GM10248 (cell line): ENCODE measurements at regions of chr14 and their contacts with region 1.

Region 1: GRCh38 chr14:20413045-20413799 is at the start of gene TEP1:
- DNase-seq: peak; percentile 80
- CTCF ChIP-seq: no peak

Region 2: DNA sequence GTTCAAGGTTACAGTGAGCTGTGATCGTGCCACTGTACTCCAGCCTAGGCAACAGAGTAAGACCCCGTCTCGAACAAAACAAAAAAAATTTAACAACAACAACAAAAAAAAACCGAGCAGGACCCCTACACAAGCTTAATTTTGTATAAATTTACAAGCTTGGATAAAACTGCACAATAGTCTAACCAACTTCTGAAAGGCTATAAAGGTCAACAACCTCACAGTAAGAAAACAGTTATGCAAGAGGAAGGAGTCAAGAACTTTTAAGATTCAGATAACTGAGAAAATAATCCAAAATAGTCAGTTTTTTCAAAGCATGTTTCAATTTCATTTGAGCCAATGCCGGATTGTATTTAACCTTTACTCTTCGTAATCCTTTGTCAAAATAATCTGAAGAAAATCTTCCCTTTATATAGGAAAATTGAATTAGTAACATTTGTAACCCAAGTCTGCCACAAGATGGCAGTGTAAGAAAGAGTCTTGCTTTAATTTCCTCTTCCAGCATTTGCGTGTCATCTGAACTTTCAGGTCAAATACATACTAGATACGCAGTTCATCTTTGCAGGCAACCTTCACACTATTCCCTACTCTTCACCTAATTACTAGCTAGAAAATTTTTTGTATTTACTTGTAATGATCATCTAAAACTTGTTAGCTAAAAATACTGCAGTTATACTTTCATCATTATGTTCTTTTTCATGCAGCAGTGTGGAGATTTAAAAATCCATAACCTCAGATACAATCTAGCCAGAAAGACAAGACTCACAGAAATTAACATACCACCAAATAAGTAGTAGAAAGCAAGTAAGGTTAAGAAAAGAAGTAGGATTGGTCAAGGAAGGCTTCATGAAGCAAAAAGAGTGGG is 86.0 kb before region 1 on chr14:
- CTCF ChIA-PET with region 1: interaction called, 10 read pairs
- POLR2A ChIA-PET with region 1: no interaction called
- DNase-seq: peak; percentile 60
- CTCF ChIP-seq: peak; percentile 58

Region 3: DNA sequence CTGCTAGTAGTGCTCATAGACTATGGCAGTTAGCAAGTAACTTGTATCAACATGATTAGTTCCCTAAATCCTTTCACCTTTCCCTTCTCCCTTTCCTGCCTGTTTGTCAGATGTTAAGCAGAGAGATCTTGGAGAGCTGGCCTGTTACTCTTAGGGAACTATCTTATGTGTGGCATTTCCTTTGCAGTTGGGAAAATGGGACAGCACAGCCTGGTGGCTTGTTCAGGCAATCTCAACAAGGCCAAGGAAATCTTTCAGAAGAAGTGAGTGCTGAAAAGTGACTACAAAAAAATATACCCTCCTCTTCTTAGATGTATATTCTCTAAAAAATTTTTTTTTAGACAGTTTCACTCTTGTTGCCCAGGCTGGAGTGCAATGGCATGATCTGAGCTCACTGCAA is 62.4 kb before region 1 on chr14:
- CTCF ChIA-PET with region 1: interaction called, 10 read pairs
- POLR2A ChIA-PET with region 1: interaction called, 4 read pairs
- DNase-seq: no peak
- CTCF ChIP-seq: peak; percentile 8

Region 4: DNA sequence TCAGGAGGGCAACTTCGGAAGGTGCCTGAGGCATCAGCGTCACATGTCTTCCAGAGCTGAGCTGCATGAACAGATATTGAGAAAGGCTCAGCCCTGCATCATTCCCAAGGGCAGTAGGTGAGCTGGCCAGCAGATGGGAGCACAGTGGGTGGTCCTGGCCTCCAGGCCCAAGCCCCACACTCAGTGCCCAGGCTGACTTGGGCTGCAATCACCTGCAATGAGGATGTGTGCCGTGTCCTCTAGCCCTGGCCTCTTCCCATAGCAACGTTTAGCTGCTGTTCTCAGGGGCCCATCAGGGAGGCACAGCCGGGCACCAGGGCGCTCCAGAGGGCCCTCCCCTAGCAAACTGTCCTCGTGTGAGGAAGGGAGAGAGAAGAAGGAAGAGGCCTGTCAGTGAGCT is 31.9 kb before region 1 on chr14:
- CTCF ChIA-PET with region 1: interaction called, 18 read pairs
- POLR2A ChIA-PET with region 1: no interaction called
- DNase-seq: no peak
- CTCF ChIP-seq: no peak

Region 5: GRCh38 chr14:20427231-20428009 is 14.2 kb after region 1 on chr14:
- CTCF ChIA-PET with region 1: interaction called, 54 read pairs
- POLR2A ChIA-PET with region 1: no interaction called
- DNase-seq: peak; percentile 73
- CTCF ChIP-seq: no peak

Region 6: GRCh38 chr14:20440882-20441281 is 27.7 kb after region 1 on chr14:
- CTCF ChIA-PET with region 1: interaction called, 12 read pairs
- POLR2A ChIA-PET with region 1: no interaction called
- DNase-seq: no peak
- CTCF ChIP-seq: no peak

Region 7: DNA sequence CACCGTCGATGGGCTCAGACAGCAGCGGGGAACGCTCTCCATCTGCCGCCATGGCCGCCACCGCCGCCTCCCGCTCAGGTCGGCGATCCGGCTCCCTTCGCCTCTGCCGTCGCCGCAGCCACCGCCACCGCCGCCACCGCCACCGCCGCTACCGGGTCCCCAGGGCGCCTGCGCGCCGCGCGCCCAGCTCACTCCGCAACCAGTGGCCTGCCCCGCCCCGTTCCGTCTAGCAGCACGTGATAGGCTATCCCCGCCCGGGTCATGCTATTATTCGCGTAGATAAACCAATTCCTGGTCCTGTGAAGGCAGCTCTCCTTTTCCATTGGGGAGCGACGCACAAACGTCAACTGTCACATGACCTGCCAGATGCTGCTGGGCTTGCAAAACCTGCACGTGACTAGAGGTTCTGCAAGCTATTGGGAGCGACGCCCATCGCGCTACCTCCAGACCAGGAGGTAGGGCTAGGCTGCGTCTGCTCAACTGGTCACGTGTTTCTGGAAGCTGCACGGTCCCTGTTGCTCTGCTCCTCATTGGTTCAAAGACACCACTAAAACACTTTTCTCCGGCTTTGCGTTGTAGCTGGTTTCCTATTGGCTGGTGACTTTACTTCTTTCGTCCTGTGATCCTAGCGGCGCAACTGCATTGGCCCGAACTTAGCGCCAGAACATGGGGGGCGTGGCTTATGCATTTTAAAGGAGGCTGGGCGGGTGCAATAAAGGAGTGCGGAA is 48.2 kb after region 1 on chr14 and contains the start of gene PIP4P1:
- CTCF ChIA-PET with region 1: interaction called, 39 read pairs
- POLR2A ChIA-PET with region 1: interaction called, 5 read pairs
- DNase-seq: peak; percentile 92
- CTCF ChIP-seq: no peak

Region 8: GRCh38 chr14:20482382-20482781 is 69.2 kb after region 1 on chr14:
- CTCF ChIA-PET with region 1: no interaction called
- POLR2A ChIA-PET with region 1: no interaction called
- DNase-seq: no peak
- CTCF ChIP-seq: no peak